Psoas muscle (tissue), 8 donors: ENCODE measurements at regions of chr1 and their contacts with region 1.

Region 1: DNA sequence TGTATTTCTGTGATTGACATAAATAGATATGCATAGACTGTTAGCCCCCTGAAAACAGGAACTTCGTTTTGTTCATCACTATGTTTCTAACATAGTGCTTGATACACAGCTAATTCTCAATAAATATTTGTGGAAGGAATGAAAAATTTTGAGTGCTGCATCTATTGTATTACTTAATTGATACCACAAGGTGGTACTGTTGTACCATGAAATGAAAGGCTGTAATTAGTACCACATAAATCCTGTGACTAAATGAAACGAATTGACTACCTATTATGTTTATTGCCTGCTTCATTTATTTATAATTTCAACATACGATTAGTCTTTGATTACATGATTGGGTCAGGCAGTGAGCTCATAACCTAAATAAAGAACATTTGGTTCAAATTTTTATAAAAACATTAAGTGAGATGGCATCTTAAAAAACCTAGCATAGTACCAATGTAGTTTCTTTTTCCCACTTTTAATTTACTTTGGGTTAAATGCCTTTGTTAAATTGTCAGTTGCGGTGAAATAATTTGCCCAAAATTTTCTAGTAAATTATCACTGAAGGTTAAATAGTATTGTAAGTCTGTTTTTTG is 15.0 kb upstream of the TGFB2 start:
- DNase-seq: no peak
- ATAC-seq: peak; percentile 65 to 84 (median 72)
- H3K4me3 ChIP-seq: no peak overlapping the region
- H3K27ac ChIP-seq: no peak overlapping the region
- H3K4me1 ChIP-seq: no peaks in the 10 kb centered on the region
- H3K27me3 ChIP-seq: no peaks in the 10 kb centered on the region
- CTCF ChIP-seq: peak; percentile 74

Region 2: DNA sequence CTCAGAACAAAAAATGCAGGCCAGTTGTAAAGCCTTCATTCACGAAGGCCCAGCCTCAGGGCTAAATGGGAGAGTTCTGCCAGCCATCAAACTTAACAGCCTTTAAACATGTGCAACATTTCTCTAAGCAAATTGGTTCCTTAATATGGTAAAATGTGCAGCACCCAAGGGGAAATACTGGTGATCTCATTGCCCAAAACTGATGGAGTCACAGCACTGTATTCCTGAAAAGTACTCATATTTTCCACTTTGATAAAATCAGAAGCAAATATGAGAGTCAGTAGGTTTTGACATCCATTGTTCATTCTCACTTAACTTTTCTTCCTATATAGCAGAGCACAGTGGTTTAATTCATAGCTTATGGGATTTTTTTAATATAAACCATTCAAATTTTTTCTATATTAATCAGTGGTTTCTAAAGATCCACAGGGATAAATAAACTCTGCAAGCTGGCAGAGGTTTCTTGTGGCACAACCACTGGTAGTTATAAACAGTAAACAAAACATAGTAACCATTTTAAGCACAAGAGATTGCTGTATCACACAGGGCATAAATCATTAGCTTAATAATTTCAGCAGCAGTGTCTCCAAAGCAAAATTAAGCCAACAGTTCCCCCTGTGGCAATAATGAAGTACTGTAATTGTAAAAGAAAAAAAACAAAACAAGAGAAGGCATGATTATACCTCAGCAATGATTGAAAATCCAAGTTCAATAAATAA is 736.7 kb after region 1 on chr1:
- intact Hi-C with region 1: loop called in 1 of 2 experiments (anchors 10 kb)
- DNase-seq: no peak
- ATAC-seq: peak in 2 of 4 donors; percentile 31 to 71
- H3K4me3 ChIP-seq: no peak overlapping the region
- H3K27ac ChIP-seq: no peak overlapping the region
- H3K4me1 ChIP-seq: no peaks in the 10 kb centered on the region
- H3K27me3 ChIP-seq: no peaks in the 10 kb centered on the region
- CTCF ChIP-seq: peak; percentile 32

Region 3: GRCh38 chr1:219566951-219567947 is 1237.1 kb after region 1 on chr1:
- intact Hi-C with region 1: loop called in 1 of 2 experiments (anchors 5 kb)
- DNase-seq: no peak
- ATAC-seq: peak in 1 of 4 donors; percentile 43
- H3K4me3 ChIP-seq: no peak overlapping the region
- H3K27ac ChIP-seq: no peak overlapping the region
- H3K4me1 ChIP-seq: no peaks in the 10 kb centered on the region
- H3K27me3 ChIP-seq: no peaks in the 10 kb centered on the region
- CTCF ChIP-seq: peak; percentile 40

Region 4: GRCh38 chr1:219812491-219813203 is 1482.5 kb after region 1 on chr1:
- intact Hi-C with region 1: loop called in 1 of 2 experiments (anchors 10 kb)
- DNase-seq: no peak
- ATAC-seq: peak; percentile 32 to 63 (median 54)
- H3K4me3 ChIP-seq: no peak overlapping the region
- H3K27ac ChIP-seq: no peak overlapping the region
- H3K4me1 ChIP-seq: no peaks in the 10 kb centered on the region
- H3K27me3 ChIP-seq: no peaks in the 10 kb centered on the region
- CTCF ChIP-seq: peak; percentile 53